HEK293 (cell line): ENCODE measurements at regions of chr6 and their contacts with region 1.

Region 1: DNA sequence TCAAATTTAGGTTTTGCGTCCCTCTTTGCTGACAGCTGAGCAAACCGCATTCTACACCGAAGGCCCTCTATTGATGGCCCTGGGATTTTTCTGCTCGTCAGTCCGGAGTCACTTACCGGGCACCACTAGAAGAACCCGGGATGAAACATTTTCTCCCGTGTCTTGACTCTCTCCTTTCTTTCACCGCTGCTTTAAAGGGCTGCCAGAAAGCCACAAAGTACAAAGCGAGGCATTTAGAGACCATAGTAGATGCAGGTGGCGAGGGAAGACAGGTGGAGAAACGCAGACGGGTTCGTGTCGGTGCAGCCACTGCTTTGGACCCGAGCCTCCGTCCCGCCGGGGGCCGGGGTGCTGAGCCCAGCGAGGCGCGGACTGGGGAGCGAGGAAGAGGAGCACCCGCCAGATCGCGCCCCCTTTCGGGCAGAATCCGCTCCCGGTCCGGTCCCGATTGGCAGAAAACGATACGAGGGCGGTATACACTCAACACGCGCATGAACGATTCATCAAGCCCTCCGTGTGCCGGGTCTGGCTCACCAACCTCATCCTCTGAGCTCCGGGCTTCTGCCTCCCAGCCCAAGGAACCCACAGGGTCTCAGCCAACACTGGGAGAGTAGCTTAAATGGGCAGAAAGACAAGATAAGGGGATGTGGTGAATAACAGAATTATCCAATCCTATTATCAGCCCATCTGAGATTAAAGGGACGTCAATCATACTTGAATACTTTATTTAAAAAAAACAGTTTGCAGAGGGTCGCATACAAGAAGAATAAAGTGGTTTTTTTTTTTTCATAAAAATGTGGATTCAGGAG is 84.9 kb downstream of the TRIM27 start:
- H3K4me3 ChIP-seq: peak overlapping the region; percentile 93
- H3K27ac ChIP-seq: peak overlapping the region; percentile 76
- H3K4me1 ChIP-seq: no peaks in the 10 kb centered on the region
- CTCF ChIP-seq: peak; percentile 98

Region 2: DNA sequence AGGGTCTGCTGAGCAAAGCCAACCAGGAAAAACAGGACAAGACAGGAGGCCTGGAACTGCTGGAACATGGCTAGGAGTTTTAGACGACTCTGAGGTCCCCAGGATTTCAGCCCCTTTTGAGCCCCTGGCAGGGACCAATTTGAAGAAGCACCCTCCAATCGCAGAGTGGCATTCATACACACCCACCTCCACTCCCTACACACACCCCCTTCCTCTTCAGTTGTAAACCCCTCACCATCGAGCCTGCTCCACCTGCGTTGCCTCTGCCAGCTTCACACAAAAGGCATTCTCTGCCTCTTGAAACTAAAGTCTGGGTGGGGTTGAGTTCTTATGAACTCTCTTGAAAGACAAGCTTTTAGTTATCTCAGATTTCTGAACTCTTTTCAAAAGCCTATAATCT is 323.2 kb before region 1 on chr6 and contains the start of gene GPX6:
- CTCF ChIA-PET with region 1: no interaction called
- POLR2A ChIA-PET with region 1: no interaction called
- H3K4me3 ChIP-seq: no peak within 1 kb of the TSS
- H3K27ac ChIP-seq: no peak within 1 kb of the TSS
- H3K4me1 ChIP-seq: no peaks in the 10 kb centered on the region
- CTCF ChIP-seq: no peak

Region 3: DNA sequence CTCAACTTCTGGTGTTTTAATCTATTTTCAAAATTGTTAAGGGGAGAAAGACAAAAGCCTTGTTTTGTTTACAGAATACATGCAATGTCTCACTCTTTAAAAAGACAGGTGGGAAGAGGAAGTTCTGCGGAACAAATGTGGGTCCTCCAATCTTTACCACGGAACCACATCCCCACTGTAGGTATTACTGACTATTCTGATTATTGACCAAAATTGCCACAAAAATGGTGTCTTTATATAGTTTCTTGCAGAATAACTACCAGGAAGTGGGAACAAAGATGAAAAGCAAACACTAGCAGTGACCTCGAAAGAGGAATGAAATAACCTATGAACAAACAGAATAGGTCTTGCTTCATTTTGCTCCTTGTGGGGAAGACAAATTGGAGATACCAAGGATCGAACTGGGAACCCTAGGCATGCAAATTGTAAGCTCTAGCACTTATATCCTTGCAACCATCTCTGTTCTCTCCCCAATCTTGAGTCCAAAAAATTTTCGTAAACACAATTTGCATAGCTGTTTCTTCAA is 206.4 kb before region 1 on chr6:
- CTCF ChIA-PET with region 1: no interaction called
- POLR2A ChIA-PET with region 1: no interaction called
- H3K4me3 ChIP-seq: no peak overlapping the region
- H3K27ac ChIP-seq: no peak overlapping the region
- H3K4me1 ChIP-seq: no peaks in the 10 kb centered on the region
- CTCF ChIP-seq: no peak

Region 4: DNA sequence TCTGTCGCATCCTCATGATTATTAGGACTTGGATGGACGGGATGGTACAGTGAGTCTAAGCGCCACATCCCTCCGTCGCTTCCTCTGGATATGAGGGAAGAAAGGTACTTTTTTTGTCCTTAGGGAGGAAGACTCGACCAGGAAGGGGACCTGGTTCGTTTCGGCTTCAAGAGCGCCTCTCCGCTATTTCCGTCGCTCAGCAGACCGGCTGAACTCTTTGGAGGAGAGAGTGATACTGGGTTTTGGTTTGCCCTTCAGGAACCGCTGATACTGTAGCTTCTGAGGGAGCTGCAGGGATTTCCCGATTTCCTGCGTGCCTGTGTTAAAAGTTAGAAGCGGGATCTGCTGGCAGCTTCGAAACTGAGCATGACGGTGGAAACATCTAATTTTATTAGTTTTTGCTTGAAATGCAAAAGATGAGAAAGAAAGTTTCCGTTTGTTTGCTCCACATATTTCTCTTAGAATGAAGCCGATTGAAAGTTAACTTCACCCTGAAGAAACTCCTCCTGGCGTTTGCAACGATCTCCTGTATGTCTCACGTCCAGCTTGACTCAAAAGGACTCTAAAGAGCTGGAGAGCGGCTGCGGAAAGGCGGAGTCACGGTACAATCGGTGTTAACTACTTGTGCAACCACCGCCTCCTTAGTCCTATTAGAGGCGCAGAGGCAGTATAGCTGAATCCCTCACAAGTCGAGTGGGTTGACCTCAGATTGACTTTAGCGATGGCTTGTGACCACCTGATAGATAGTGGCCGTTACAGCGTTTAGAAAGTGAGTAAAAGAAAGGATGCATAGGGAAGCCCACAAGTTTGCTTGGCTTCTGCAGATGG is 44.4 kb before region 1 on chr6:
- CTCF ChIA-PET with region 1: interaction called, 19 read pairs
- POLR2A ChIA-PET with region 1: no interaction called
- H3K4me3 ChIP-seq: peak overlapping the region; percentile 39
- H3K27ac ChIP-seq: no peak overlapping the region
- H3K4me1 ChIP-seq: 0 out of 2 replicates have a peak, but pooled peaks cover 4% of the 10 kb centered on the region
- CTCF ChIP-seq: peak; percentile 6; the same call in 1 of the 2 replicates

Region 5: DNA sequence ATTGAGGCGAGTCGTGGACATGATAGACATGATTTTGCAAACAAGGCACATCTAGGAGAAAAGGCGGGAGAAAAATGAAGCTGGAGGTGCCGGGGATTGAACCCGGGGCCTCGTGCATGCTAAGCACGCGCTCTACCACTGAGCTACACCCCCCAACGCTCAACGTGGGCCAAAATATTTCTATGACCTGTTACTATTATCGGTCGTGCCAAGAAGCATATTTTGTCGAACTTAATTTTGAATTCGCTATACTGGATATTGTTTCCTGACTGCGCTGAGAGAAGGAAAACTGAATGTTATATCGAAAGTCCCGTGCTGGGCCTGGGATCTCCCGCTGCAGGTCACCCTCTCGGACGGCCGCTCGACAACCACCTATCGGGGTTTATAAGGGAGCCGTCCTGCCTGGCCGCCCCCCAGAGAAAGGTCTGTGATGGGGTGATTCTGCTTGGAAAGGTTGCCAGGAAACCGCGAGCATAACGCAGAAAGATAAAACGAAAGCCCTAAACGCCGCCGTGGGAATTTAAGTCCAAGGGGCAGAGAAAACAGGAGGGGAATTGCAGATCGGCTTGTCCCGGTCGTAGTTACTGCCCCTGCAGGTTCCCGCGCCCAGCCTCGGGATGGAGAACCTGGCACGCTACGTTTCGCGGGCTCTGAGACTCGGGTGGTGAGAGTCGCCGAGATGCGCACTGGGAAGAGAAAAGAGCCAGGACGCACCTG is 24.9 kb after region 1 on chr6:
- CTCF ChIA-PET with region 1: interaction called, 73 read pairs
- POLR2A ChIA-PET with region 1: interaction called, 11 read pairs
- H3K4me3 ChIP-seq: peak overlapping the region; percentile 77
- H3K27ac ChIP-seq: peak overlapping the region; percentile 60; the same call in 1 of the 2 replicates
- H3K4me1 ChIP-seq: no peaks in the 10 kb centered on the region
- CTCF ChIP-seq: peak; percentile 70

Region 6: GRCh38 chr6:28923318-28924102 is 84.7 kb after region 1 on chr6 and contains the start of gene TRIM27:
- CTCF ChIA-PET with region 1: interaction called, 3 read pairs
- POLR2A ChIA-PET with region 1: interaction called, 13 read pairs
- H3K4me3 ChIP-seq: peak within 1 kb of the TSS; percentile 49
- H3K27ac ChIP-seq: peak within 1 kb of the TSS; percentile 77
- H3K4me1 ChIP-seq: peaks cover 4% of the 10 kb centered on the region; the same call in 1 of the 2 replicates
- CTCF ChIP-seq: peak; percentile 62

Region 7: GRCh38 chr6:29016559-29017427 is 178.0 kb after region 1 on chr6:
- CTCF ChIA-PET with region 1: interaction called, 20 read pairs
- POLR2A ChIA-PET with region 1: interaction called, 3 read pairs
- H3K4me3 ChIP-seq: peak overlapping the region; percentile 75
- H3K27ac ChIP-seq: peak overlapping the region; percentile 55
- H3K4me1 ChIP-seq: no peaks in the 10 kb centered on the region
- CTCF ChIP-seq: peak; percentile 88